ENCODE measurements at regions of chr10 and their contacts with region 1.

Region 1: DNA sequence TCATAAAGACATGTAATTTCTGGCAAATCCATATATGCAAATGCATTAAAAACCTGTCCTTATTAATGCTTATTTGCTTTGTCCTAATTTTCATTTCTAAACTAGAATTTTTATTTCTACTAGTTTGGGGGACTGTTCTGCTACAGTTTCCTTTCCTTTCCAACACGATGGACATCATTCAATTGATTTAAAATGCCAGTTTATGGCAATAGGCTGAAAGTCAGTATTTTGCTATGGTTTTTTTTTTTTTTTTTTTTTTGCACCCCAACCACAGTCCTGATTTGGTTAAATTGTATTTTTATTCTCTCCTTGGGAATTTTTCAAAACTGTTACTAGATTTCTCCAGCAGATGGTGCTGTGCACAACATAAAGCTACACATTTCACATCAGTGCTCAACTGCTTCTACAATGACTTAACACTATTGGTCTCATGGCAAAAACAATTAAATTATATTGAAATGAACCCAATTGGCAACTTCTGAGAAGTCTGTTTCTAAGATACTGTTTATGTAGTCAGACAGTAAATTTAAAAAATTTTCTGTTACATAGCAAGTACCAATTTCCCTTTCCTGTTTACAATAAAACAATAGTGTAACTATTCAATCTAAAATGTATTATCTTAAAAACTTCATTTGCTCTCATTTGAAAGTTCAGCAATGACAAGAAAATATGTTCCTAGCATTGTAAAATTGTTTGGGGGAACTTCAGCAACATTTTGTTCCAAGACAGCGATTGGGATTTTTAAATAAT is 193.8 kb upstream of the CCDC6 start:
- DNase-seq: no peak
- H3K4me3 ChIP-seq: no peak overlapping the region
- H3K27ac ChIP-seq: no peak overlapping the region
- H3K4me1 ChIP-seq: no peaks in the 10 kb centered on the region
- H3K27me3 ChIP-seq: no peaks in the 10 kb centered on the region
- CTCF ChIP-seq: peak; percentile 42 to 73 (median 56)
- POLR2A ChIP-seq: no peak

Region 2: DNA sequence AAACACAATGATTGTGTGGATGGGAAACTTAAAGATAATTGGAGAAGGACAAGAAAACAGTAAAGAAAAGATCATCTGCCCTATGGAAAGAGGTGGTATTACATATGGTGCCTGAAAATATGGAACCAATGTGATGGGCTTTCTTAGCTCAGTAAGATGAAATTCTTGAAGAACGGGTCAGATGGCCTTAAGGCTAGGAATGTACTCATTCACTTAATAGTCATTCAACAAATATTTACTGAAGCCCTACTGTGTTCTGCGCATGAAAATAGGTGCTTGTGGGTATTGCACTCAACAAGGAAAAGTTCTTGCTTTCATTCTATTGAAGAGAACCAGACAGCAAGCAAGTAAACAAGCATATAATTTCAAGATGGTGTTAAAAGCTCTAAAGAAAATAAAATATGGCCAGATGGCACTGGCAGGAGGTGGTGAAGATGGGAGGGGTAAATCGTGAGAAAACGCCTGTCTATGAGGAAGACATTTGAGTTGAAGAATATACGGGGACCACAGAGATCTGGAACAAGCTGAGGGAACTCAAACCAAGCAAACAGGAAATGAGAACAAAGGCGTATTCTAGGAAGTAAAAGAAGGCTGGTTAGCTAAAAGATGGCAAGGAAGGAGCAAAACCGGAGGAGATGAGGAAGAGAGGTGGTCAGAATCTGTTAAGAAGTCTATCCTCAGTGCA is 109.9 kb after region 1 on chr10:
- intact Hi-C with region 1: loop called (anchors 5 kb)
- DNase-seq: no peak
- H3K4me3 ChIP-seq: no peak overlapping the region
- H3K27ac ChIP-seq: no peak overlapping the region
- H3K4me1 ChIP-seq: no peaks in the 10 kb centered on the region
- H3K27me3 ChIP-seq: no peaks in the 10 kb centered on the region
- CTCF ChIP-seq: no peak
- POLR2A ChIP-seq: no peak

Region 3: DNA sequence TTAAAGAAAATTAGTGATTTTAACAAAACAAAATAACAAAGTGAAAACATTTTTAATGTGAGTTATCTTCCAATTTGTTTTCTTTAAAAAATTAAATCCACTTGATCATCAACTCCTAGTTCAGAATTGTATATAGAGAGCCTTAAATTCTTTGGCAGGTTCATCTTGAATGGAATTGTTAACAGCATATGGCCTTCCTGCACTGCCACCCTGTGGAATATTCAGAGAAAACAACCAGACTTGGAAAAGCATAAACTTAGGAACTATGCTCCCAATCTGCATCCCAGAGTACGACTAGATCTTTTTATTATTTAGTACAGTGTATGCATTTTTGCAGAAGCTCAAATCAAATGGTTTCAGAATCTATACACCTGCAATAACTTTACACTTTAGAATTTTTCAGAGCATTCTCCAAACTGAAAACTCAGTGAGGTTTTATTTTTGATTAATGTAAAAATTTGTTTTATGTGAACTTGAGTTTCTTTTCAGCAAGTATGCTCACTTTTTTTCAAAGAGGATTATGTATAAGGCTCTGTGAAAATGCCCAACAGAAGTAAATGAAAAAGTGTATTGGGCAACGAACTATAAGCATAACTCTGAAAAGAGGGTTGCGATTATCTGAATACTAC is 334.4 kb after region 1 on chr10:
- intact Hi-C with region 1: loop called (anchors 10 kb)
- DNase-seq: peak; percentile 18 to 22
- H3K4me3 ChIP-seq: no peak overlapping the region
- H3K27ac ChIP-seq: no peak overlapping the region
- H3K4me1 ChIP-seq: no peaks in the 10 kb centered on the region
- H3K27me3 ChIP-seq: no peaks in the 10 kb centered on the region
- CTCF ChIP-seq: peak; percentile 47 to 74 (median 52)
- POLR2A ChIP-seq: no peak

Measured in uterus (tissue), 4 donors.